HCT116 (cell line): ENCODE measurements at regions of chr2 and their contacts with region 1.

Region 1: GRCh38 chr2:218710687-218711549 is at the start of gene TTLL4:
- DNase-seq: peak; percentile 87
- ATAC-seq: peak; percentile 97
- H3K4me3 ChIP-seq: peak within 1 kb of the TSS; percentile 73 to 79
- H3K27ac ChIP-seq: peak within 1 kb of the TSS; percentile 84
- H3K4me1 ChIP-seq: peaks cover 0 to 11% of the 10 kb centered on the region in 2 experiments; a peak in 2 of 4 replicates
- H3K27me3 ChIP-seq: no peaks in the 10 kb centered on the region
- CTCF ChIP-seq: peak; percentile 75 to 88 (median 76)
- POLR2A ChIP-seq: peak; percentile 65
- RAD21 ChIP-seq: peak; percentile 76
- total RNA-seq, gene TTLL4: 53.0 TPM

Region 2: GRCh38 chr2:218074031-218074430 is 636.9 kb before region 1 on chr2:
- CTCF ChIA-PET with region 1: no interaction called
- POLR2A ChIA-PET with region 1: no interaction called
- RAD21 ChIA-PET with region 1: no interaction called
- intact Hi-C with region 1: no loop called
- DNase-seq: peak; percentile 7
- ATAC-seq: peak; percentile 94
- H3K4me3 ChIP-seq: no peak overlapping the region
- H3K27ac ChIP-seq: no peak overlapping the region
- H3K4me1 ChIP-seq: peaks cover 0 to 6% of the 10 kb centered on the region in 2 experiments; a peak in 2 of 4 replicates
- H3K27me3 ChIP-seq: no peaks in the 10 kb centered on the region
- CTCF ChIP-seq: peak; percentile 39 to 83 (median 77); a peak in 5 of 6 replicates
- POLR2A ChIP-seq: no peak
- RAD21 ChIP-seq: peak; percentile 40; the same call in 1 of the 2 replicates

Region 3: GRCh38 chr2:218691234-218691633 is 19.7 kb before region 1 on chr2:
- CTCF ChIA-PET with region 1: interaction called, 11 read pairs
- POLR2A ChIA-PET with region 1: no interaction called
- RAD21 ChIA-PET with region 1: no interaction called
- intact Hi-C with region 1: no loop called
- DNase-seq: no peak
- ATAC-seq: no peak
- H3K4me3 ChIP-seq: no peak overlapping the region
- H3K27ac ChIP-seq: no peak overlapping the region
- H3K4me1 ChIP-seq: no peaks in the 10 kb centered on the region
- H3K27me3 ChIP-seq: no peaks in the 10 kb centered on the region
- CTCF ChIP-seq: no peak
- POLR2A ChIP-seq: no peak
- RAD21 ChIP-seq: no peak

Region 4: GRCh38 chr2:218727502-218728165 is 16.7 kb after region 1 on chr2:
- CTCF ChIA-PET with region 1: interaction called, 12 read pairs
- POLR2A ChIA-PET with region 1: interaction called, 3 read pairs
- RAD21 ChIA-PET with region 1: interaction called in 1 of 2 experiments, 3 read pairs
- intact Hi-C with region 1: no loop called
- DNase-seq: no peak
- ATAC-seq: no peak
- H3K4me3 ChIP-seq: no peak overlapping the region
- H3K27ac ChIP-seq: no peak overlapping the region
- H3K4me1 ChIP-seq: peaks cover 17 to 29% of the 10 kb centered on the region in 2 experiments
- H3K27me3 ChIP-seq: no peaks in the 10 kb centered on the region
- CTCF ChIP-seq: peak; percentile 47 to 83 (median 58)
- POLR2A ChIP-seq: no peak
- RAD21 ChIP-seq: peak; percentile 75

Region 5: DNA sequence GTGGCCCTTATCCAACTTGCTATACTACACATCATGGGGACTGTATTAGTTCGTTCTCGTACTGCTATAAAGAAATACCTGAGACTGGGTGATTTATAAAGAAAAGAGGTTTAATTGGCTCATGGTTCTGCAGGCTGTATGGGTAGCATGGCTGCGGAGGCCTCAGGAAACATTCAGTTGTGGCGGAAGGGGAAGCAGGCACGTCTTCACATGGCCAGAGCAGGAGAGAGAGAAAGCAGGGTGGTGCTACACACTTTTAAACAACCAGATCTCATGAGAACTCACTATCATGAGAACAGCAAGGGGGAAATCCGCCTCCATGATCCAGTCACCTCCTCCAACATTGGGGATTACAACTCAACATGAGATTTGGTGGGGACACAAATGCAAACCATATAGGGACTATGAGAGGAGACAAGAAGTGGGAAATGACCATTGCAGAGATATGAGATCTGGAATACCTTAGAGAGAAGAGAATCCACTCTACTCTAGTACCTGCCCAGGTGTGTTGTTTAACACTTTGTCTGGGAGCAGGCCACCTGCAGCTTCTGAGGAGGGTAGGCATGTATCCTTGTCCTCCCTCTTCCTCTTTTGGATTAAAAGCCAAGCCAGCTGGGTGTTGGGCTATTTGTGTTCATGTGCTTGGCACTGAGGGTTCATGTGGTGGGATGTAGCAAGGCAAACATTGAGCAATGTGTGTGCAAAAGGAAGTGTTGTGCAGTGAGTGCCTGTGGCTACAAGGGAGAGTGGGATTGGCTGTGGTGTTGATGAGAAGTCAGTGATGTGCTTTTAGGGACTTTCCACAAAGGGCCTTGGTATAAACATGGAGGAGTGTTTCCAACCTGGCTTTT is 22.5 kb after region 1 on chr2:
- CTCF ChIA-PET with region 1: interaction called, 12 read pairs
- POLR2A ChIA-PET with region 1: no interaction called
- RAD21 ChIA-PET with region 1: interaction called in 1 of 2 experiments, 3 read pairs
- intact Hi-C with region 1: no loop called
- DNase-seq: no peak
- ATAC-seq: no peak
- H3K4me3 ChIP-seq: no peak overlapping the region
- H3K27ac ChIP-seq: no peak overlapping the region
- H3K4me1 ChIP-seq: peaks cover 17 to 29% of the 10 kb centered on the region in 2 experiments
- H3K27me3 ChIP-seq: no peaks in the 10 kb centered on the region
- CTCF ChIP-seq: no peak
- POLR2A ChIP-seq: no peak
- RAD21 ChIP-seq: no peak